ENCODE measurements at regions of chr2 and their contacts with region 1.

Region 1: DNA sequence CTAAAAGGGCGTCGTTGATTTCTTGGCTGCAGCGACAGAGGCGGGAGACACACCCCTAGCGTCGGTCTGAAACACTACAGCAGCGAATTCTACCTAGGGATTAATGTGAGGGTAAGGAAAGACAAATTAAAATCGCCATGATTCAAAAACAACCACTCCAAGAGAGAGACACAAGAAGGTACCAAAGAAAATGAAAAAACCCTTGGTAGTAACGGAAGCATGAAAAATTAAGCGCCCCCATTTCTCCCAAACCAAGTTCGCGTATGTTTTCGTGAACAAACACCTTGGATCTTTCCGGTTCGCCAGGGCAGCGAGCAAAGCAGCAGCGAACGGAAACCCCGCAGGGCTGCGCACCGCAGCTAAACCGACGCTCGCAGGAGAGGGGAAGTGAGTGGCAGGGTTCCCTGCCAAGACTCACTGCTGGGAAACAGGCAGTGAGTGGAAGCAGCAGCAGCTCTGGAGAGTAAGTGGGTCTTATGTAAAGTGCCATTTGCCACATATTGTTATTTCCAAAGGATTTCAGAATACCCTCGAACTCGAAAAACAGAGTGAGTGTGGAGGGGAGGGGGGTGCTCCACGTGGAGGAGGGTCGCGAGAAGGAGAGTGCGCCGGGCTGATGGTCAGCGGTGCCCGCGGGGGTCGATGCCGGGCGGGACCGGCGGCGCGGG is 1.0 kb downstream of the PPP3R1 start:
- DNase-seq: peak; percentile 71 to 79 (median 75)
- ATAC-seq: peak; percentile 53 to 69 (median 61)
- H3K4me3 ChIP-seq: peak overlapping the region; percentile 45 to 93 (median 80)
- H3K27ac ChIP-seq: peak overlapping the region; percentile 89 to 97 (median 94)
- H3K4me1 ChIP-seq: peaks cover 9 to 73% (median 53%) of the 10 kb centered on the region in 12 donors
- H3K27me3 ChIP-seq: no peaks in the 10 kb centered on the region
- CTCF ChIP-seq: peak; percentile 47 to 78 (median 68)
- POLR2A ChIP-seq: no peak

Region 2: GRCh38 chr2:67938053-67938452 is 313.3 kb before region 1 on chr2:
- intact Hi-C with region 1: no loop called
- DNase-seq: no peak
- ATAC-seq: no peak
- H3K4me3 ChIP-seq: no peak overlapping the region
- H3K27ac ChIP-seq: no peak overlapping the region
- H3K4me1 ChIP-seq: no peaks in the 10 kb centered on the region
- H3K27me3 ChIP-seq: no peaks in the 10 kb centered on the region
- CTCF ChIP-seq: no peak
- POLR2A ChIP-seq: no peak

Region 3: DNA sequence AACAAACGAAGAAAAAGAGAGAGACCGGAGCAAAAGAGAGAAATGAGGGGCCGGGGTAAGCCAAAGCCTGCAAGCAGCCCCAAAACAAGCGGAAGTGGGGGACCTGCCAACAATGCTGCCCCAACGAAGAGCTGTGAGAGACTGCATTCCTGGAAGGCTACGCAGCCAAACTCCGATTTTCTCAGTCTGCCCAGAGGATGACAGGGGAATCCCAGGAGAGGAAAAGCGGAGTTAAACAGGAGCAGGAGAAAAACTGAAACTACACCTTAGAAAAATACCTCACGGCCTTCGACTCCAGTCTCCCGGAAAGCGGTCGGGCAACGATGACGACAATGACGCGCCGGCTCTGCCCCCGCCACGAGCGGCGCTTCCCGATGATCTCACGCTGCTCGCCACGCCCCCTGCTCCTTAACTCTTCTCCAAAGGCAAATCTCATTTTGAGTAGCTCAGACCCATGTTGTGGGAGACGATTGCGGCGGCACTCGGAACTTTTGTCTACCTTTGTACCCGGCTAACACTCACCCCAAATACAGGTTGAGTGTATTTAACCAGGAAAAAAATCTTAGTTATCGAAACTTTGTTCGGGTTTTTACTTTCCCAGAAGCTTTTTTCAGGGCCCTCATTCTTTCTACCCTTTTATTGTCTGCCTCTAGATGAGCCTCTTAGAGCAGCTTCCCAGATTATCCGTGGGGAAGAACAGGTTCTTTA is 188.5 kb before region 1 on chr2 and contains the start of gene C1D:
- intact Hi-C with region 1: loop called in 1 of 10 experiments (anchors 5 kb)
- DNase-seq: peak; percentile 95 to 96 (median 95)
- ATAC-seq: peak; percentile 96 to 99 (median 99)
- H3K4me3 ChIP-seq: peak within 1 kb of the TSS; percentile 57 to 86 (median 76)
- H3K27ac ChIP-seq: peak within 1 kb of the TSS; percentile 27 to 90 (median 81)
- H3K4me1 ChIP-seq: peaks cover 0 to 51% (median 33%) of the 10 kb centered on the region in 12 donors
- H3K27me3 ChIP-seq: no peaks in the 10 kb centered on the region
- CTCF ChIP-seq: no peak
- POLR2A ChIP-seq: peak in 1 of 2 donors; percentile 67
- total RNA-seq, gene C1D: 12.5 to 36.6 (median 16.9) TPM

Region 4: GRCh38 chr2:68110102-68110501 is 141.2 kb before region 1 on chr2:
- intact Hi-C with region 1: no loop called
- DNase-seq: no peak
- ATAC-seq: no peak
- H3K4me3 ChIP-seq: no peak overlapping the region
- H3K27ac ChIP-seq: no peak overlapping the region
- H3K4me1 ChIP-seq: no peaks in the 10 kb centered on the region
- H3K27me3 ChIP-seq: no peaks in the 10 kb centered on the region
- CTCF ChIP-seq: no peak
- POLR2A ChIP-seq: no peak

Region 5: GRCh38 chr2:68157402-68158133 is 93.8 kb before region 1 on chr2 and contains the start of gene PNO1:
- intact Hi-C with region 1: loop called in 8 of 10 experiments (anchors 1 to 10 kb)
- DNase-seq: peak; percentile 96 to 97 (median 96)
- ATAC-seq: peak; percentile 97 to 99 (median 98)
- H3K4me3 ChIP-seq: peak within 1 kb of the TSS; percentile 61 to 97 (median 86)
- H3K27ac ChIP-seq: peak within 1 kb of the TSS; percentile 87 to 98 (median 94)
- H3K4me1 ChIP-seq: peaks cover 0 to 45% (median 32%) of the 10 kb centered on the region in 12 donors
- H3K27me3 ChIP-seq: no peaks in the 10 kb centered on the region
- CTCF ChIP-seq: no peak
- POLR2A ChIP-seq: peak in 1 of 2 donors; percentile 50
- total RNA-seq, gene PNO1: 6.6 to 11.3 (median 8.8) TPM

Region 6: DNA sequence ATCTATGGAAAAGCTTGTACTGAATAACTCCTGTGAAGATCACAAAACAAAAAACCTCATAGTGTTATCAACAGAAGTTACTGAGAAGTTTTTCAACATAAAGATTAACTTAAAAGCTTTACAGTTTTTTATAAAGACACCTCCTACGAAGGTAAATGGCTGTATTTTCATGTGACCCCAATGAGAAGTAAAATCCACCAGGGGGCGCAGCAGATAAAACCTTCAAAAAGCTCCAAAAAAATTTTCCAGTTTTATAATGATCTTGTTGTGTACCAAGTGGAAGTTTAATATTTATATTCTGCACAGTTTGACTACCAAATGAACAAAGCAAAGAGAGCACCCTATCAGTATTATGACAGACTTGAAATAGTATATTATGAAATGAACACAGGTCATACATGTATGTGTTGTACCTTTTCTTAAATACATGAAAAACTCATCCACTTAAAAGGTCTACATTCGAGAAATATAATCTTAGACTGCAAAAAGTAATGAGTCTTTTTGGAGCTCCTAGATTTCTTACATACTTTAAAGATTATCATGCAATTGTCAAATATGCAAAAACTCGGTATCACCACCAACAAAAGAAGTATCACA is 55.1 kb before region 1 on chr2:
- intact Hi-C with region 1: loop called in 7 of 10 experiments (anchors 2 to 5 kb)
- DNase-seq: no peak
- ATAC-seq: peak in 1 of 4 donors; percentile 47
- H3K4me3 ChIP-seq: no peak overlapping the region
- H3K27ac ChIP-seq: no peak overlapping the region
- H3K4me1 ChIP-seq: peaks cover 0 to 57% (median 19%) of the 10 kb centered on the region in 12 donors
- H3K27me3 ChIP-seq: no peaks in the 10 kb centered on the region
- CTCF ChIP-seq: peak in 11 of 12 donors; percentile 42 to 87 (median 77)
- POLR2A ChIP-seq: no peak

Region 7: GRCh38 chr2:68282811-68283418 is 31.6 kb after region 1 on chr2:
- intact Hi-C with region 1: loop called in 2 of 10 experiments (anchors 2 to 5 kb)
- DNase-seq: no peak
- ATAC-seq: no peak
- H3K4me3 ChIP-seq: no peak overlapping the region
- H3K27ac ChIP-seq: no peak overlapping the region
- H3K4me1 ChIP-seq: peaks cover 0 to 34% (median 7%) of the 10 kb centered on the region in 12 donors
- H3K27me3 ChIP-seq: no peaks in the 10 kb centered on the region
- CTCF ChIP-seq: peak; percentile 58 to 80 (median 74)
- POLR2A ChIP-seq: no peak

Region 8: DNA sequence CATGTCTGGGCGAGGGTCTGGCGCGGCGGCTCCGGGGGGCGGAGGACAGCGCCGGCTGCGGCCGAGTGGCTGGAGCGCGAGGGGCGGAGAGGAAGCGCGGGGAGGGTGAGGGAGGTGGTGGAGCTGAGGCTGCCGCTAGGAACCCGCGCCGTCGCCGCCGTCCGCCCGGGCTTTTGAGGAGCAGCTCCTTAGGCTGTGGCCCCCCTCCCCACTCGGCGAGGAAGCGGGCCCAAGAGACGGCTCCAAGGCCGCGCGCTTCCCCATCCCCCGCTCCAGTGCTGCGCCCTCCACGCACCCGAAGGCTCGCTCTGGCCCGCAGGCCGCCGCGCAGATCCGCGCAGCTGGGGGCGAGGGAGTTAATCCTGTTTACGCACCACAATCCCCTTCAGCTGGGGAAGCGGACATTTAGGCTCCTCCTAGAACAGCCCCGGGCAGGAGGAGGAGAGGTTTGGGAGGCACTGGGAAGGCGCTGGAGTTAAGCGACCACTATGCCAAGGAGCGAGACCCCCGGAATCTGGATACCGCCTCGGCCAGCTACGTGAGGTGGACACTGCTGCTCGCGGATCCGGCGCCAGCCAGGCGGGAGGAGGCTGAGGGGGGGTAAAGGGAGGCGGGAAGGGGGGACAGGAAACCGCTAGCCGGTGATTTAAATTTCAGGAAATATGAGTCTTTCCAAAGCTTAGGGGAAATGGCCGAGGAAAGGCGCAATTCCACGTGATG is 68.2 kb after region 1 on chr2 and contains the start of gene CNRIP1:
- intact Hi-C with region 1: loop called in 1 of 10 experiments (anchors 2 kb)
- DNase-seq: peak; percentile 81 to 85 (median 85)
- ATAC-seq: peak; percentile 75 to 93 (median 86)
- H3K4me3 ChIP-seq: peak within 1 kb of the TSS; percentile 70 to 92 (median 84)
- H3K27ac ChIP-seq: peak within 1 kb of the TSS; percentile 91 to 99 (median 97)
- H3K4me1 ChIP-seq: peaks cover 0 to 25% (median 12%) of the 10 kb centered on the region in 12 donors
- H3K27me3 ChIP-seq: peaks cover 0 to 9% (median 0%) of the 10 kb centered on the region in 9 donors
- CTCF ChIP-seq: peak in 1 of 12 donors; percentile 30
- POLR2A ChIP-seq: peak in 1 of 2 donors; percentile 48
- total RNA-seq, gene CNRIP1: 5.8 to 17.3 (median 7.7) TPM